ENCODE measurements at regions of chr16 and their contacts with region 1.

Region 1: DNA sequence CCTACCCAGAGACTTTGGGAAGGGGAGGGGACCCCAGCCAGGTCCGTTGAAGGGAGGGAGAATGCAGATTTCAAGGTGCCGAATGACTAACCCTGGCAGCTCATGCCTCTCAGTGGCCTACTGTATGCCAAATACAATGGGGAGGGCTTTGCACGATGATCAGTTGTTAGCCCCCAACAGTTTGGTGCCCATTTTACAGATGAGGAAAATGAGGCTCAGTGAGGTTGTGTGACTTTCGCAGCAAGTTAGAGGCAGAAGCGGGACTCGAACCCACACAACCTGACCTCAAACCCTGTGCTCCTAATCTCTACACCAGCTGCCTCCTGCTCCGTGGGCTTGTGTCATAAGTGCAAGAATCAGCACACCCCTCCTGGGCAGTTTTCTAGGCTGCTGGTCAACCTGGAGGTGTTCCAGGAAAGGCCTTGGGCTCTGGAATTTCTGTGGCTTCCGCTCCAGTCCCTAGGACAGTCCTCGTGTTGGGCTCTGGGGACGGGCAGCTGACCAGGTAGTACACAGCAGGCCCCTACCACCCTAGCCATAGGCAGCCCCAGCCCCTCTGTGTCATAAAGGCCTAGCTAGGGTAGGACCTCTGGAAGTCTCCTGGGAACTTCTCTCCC is 11.9 kb upstream of the NAGPA start:
- DNase-seq: no peak
- H3K4me3 ChIP-seq: no peak overlapping the region
- H3K27ac ChIP-seq: no peak overlapping the region
- H3K4me1 ChIP-seq: no peaks in the 10 kb centered on the region
- H3K27me3 ChIP-seq: no peaks in the 10 kb centered on the region
- CTCF ChIP-seq: no peak
- POLR2A ChIP-seq: no peak

Region 2: DNA sequence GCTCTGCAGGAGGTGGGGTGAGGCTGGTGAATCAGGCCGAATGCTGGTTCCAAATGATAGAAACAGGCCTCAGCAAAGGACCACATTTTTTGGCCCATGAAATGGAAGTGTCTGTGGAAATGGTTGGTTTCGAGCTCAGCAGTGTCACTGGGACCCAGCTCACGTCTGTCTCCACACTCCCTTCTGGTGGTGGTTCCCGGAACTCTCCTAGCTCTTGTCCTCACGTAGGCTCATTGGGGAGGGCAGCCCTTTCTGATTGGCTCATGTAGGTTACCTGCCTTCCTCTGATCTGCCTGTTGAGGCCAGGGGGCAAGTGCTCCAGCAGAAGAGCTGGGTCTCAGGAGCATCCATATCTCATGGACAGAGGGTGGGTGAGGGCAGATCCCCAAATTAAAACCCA is 30.0 kb after region 1 on chr16:
- intact Hi-C with region 1: loop called (anchors 5 kb)
- DNase-seq: no peak
- H3K4me3 ChIP-seq: no peak overlapping the region
- H3K27ac ChIP-seq: no peak overlapping the region
- H3K4me1 ChIP-seq: peaks cover 0 to 8% of the 10 kb centered on the region in 2 donors
- H3K27me3 ChIP-seq: no peaks in the 10 kb centered on the region
- CTCF ChIP-seq: no peak
- POLR2A ChIP-seq: no peak

Measured in breast epithelium (tissue), 4 donors.